PC-9 (cell line): ENCODE measurements at regions of chr19 and their contacts with region 1.

Region 1: DNA sequence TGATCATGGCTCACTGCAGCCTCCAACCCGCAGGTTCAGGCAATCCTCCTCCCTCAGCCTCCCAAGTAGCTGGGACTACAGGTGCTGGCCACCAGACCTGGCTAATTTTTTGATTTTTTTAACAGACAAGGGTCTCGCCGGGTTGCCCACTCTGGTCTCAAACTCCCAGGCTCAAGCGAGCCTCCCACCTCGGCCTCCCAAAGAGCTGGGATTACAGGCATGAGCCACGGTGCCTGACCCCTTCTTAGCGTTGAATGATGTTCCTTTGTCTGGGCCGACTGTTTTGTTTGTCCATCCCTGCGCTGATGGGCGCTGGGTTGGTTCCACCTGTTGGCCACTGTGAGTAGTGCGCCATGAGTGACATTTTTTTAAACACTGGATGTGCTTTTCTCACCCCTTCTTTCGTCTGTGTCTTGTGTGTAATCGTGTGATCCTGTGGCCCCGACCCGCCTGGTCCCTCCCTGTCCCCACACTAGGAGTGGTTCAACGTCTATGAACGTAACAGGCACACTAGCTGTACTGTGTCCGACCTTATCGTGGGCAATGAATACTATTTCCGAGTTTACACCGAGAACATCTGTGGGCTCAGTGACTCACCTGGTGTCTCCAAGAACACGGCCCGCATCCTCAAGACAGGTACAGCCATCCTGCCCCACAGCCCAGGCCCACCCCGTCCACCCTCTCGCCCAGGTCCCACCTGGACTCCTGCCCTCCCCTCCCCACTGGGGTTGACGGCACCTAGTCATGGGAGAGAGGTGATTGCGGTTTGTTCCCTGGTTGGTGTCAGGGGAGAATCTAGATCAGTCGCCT is 15.0 kb upstream of the EMC10 start:
- DNase-seq: peak; percentile 46 to 65
- H3K4me3 ChIP-seq: no peak overlapping the region
- H3K27ac ChIP-seq: no peak overlapping the region
- H3K4me1 ChIP-seq: peaks cover 8% of the 10 kb centered on the region
- H3K27me3 ChIP-seq: peaks cover 23% of the 10 kb centered on the region
- CTCF ChIP-seq: peak; percentile 90

Region 2: DNA sequence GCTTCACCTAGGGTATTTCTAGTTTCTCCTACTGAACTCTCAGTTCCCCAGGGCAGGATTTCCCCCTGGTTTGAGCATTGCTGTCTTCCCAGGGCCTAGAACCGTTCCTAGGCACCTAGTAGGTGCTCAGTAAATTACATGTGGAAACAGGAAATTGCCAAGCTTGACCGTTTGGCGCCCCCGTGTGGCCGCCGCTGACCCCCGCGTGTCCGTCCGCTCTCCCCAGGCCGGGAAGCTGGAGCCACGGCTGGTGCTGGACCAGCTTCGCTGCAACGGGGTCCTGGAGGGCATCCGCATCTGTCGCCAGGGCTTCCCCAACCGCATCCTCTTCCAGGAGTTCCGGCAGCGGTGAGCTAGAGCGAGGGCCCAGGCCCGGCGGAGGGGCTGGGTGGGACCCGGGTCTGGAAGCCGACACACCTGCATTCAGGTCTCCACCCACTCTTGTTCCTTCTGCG is 202.3 kb before region 1 on chr19:
- CTCF ChIA-PET with region 1: no interaction called
- POLR2A ChIA-PET with region 1: no interaction called
- intact Hi-C with region 1: loop called (anchors 2 kb)
- DNase-seq: peak in 1 of 2 experiments; percentile 37
- H3K4me3 ChIP-seq: no peak overlapping the region
- H3K27ac ChIP-seq: no peak overlapping the region
- H3K4me1 ChIP-seq: no peaks in the 10 kb centered on the region
- H3K27me3 ChIP-seq: no peaks in the 10 kb centered on the region
- CTCF ChIP-seq: peak; percentile 95

Region 3: GRCh38 chr19:50329146-50329925 is 131.9 kb before region 1 on chr19 and contains the start of gene KCNC3:
- CTCF ChIA-PET with region 1: no interaction called
- POLR2A ChIA-PET with region 1: no interaction called
- intact Hi-C with region 1: no loop called
- DNase-seq: peak; percentile 86 to 95
- H3K4me3 ChIP-seq: no peak within 1 kb of the TSS
- H3K27ac ChIP-seq: no peak within 1 kb of the TSS
- H3K4me1 ChIP-seq: peaks cover 22% of the 10 kb centered on the region; the same call in 1 of the 2 replicates
- H3K27me3 ChIP-seq: no peaks in the 10 kb centered on the region; the same call in 1 of the 2 replicates
- CTCF ChIP-seq: no peak
- total RNA-seq, gene KCNC3: 9.0 and 9.4 TPM in 2 replicates

Region 4: GRCh38 chr19:50476224-50476942 is 15.1 kb after region 1 on chr19 and contains the starts of genes EMC10 and GARIN5A:
- CTCF ChIA-PET with region 1: no interaction called
- POLR2A ChIA-PET with region 1: no interaction called
- intact Hi-C with region 1: no loop called
- DNase-seq: peak; percentile 90 to 96
- H3K4me3 ChIP-seq: peak within 1 kb of the TSS; percentile 72
- H3K27ac ChIP-seq: peak within 1 kb of the TSS; percentile 65
- H3K4me1 ChIP-seq: peaks cover 8% of the 10 kb centered on the region
- H3K27me3 ChIP-seq: no peaks in the 10 kb centered on the region
- CTCF ChIP-seq: no peak
- total RNA-seq, gene EMC10: 118 and 121 TPM in 2 replicates
- total RNA-seq, gene GARIN5A: 3.7 and 7.3 TPM in 2 replicates

Region 5: DNA sequence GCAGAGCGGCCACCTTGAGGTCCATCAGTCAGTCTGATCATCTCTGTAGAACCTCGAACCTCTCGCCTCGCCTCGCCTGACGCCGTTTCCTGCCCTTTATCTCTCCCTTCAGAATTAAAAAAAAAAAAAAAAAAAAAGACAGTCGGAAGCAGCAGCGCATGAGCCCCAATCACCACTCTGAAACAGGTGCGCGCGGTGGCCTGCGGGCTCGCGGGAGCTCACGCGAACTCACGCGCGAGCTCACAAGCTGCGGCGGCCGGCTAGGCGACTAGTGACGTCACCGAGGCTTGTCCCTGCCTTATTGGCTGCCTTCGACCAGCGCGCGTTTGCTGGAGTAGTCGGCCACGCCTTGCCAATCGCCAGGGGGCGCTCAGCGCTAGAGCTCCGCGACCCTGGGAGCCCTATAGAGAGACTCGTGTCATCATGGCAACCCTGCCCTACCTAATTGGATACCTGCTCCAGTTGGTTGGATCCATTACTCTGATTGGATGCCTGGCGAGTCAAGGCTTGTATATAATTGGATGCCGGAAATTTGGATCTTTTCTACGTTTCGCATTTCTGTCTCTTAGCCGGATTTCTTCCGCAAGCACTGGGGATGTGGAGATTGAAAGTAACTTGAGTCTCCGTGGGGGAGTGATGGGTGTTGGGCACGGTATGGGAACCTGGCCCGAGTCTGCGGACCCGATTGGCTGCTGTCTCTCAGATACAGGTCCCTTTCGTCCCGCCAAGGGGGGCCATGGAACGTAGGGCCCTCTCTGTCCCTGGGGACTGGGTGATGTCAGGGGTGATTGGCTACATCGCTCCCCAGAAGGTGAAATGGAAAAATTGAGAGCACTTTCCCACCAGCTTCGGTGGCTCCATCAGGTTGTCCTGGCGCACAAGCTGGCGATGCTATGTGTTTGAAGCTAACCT is 146.9 kb after region 1 on chr19:
- CTCF ChIA-PET with region 1: no interaction called
- POLR2A ChIA-PET with region 1: no interaction called
- intact Hi-C with region 1: no loop called
- DNase-seq: no peak
- H3K4me3 ChIP-seq: no peak overlapping the region
- H3K27ac ChIP-seq: no peak overlapping the region
- H3K4me1 ChIP-seq: no peaks in the 10 kb centered on the region
- H3K27me3 ChIP-seq: peaks cover 20% of the 10 kb centered on the region
- CTCF ChIP-seq: no peak

Region 6: DNA sequence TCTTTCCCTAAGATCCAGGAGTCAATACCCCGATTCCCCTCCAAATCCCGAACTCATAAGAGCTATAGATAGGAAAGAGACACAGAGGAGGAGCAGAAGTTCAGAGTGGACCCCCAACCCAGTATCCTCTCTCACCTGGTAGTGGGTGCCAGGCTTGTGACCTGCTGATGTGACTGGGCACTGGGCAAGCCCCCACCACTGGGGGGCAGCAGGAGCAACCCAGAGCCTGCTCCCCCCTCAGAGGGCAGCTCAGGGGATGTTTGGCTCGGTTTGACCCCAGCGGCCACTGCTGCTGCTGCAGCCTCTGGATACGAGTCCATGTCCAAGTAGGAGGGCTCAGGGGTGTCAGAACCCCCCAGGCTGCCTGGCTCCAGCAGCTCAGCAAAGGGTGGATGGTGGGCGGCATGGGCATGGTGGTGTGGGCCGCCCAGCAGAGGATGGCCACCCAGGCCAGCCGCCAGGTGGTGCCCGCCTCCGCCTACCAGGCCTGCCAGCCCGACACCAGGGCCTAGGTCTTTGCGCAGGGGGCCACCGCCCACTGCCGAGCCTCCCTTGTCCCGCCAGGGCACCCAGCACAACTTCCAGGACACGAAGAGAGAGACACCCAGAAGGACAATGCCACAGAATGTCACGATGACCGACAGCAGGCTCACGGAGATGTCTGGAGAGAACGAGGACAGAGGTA is 171.0 kb after region 1 on chr19:
- CTCF ChIA-PET with region 1: interaction called, 12 read pairs
- POLR2A ChIA-PET with region 1: no interaction called
- intact Hi-C with region 1: no loop called
- DNase-seq: no peak
- H3K4me3 ChIP-seq: no peak overlapping the region
- H3K27ac ChIP-seq: no peak overlapping the region
- H3K4me1 ChIP-seq: no peaks in the 10 kb centered on the region
- H3K27me3 ChIP-seq: peaks cover 88% of the 10 kb centered on the region
- CTCF ChIP-seq: peak; percentile 25; the same call in 1 of the 2 replicates

Region 7: GRCh38 chr19:50794439-50795237 is 333.4 kb after region 1 on chr19:
- CTCF ChIA-PET with region 1: interaction called, 20 read pairs
- POLR2A ChIA-PET with region 1: no interaction called
- intact Hi-C with region 1: no loop called
- DNase-seq: peak in 1 of 2 experiments; percentile 43
- H3K4me3 ChIP-seq: no peak overlapping the region
- H3K27ac ChIP-seq: no peak overlapping the region
- H3K4me1 ChIP-seq: no peaks in the 10 kb centered on the region
- H3K27me3 ChIP-seq: no peaks in the 10 kb centered on the region
- CTCF ChIP-seq: peak; percentile 44; the same call in 1 of the 2 replicates